Psoas muscle (tissue), 8 donors: ENCODE measurements at regions of chr2 and their contacts with region 1.

Region 1: DNA sequence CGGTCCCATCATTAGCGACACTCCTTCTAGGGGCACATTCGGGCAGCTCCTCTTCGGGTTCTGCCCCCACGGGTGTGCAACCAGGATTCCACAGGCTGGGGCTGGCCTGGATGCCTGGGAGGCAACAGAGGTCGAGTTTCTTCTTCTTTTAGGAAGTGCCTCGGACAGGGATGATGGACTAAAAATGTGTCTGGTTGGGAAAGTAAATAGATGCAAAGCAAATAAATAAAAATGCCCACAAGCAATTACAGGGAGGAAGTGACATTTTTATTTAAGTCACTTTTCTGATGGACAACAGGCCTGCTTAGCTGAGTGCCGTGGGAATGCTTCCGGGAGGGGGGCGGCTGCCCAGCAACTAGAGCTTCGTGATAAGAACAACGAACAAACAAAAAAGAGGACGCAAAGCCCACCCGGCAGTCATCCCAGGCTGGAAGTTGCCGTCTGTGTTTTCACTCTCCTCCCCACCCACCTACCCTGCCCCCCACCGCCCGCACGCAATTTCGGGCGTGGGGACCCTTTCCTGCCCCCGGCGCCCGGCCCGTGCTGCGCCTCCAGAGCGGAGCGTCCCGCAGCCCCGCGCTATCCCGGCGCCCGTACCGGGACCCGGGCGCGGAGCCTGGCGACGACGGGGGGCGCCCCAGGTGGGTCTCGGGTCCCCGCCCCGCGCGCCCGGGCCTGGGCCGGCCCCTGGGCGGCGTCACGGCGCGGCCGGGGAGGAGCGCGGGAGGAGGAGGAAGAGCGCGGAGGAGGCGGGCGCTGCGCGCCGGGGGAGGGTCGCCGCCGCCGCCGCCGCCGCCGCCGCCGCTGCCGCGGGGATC is 412 bp upstream of the NCK2 start:
- DNase-seq: peak; percentile 65 to 79
- ATAC-seq: peak; percentile 78 to 85 (median 82)
- H3K4me3 ChIP-seq: peak overlapping the region; percentile 81
- H3K27ac ChIP-seq: peak overlapping the region; percentile 86
- H3K4me1 ChIP-seq: peaks cover 36% of the 10 kb centered on the region
- H3K27me3 ChIP-seq: peaks cover 0 to 2% (median 0%) of the 10 kb centered on the region in 3 donors
- CTCF ChIP-seq: no peak

Region 2: DNA sequence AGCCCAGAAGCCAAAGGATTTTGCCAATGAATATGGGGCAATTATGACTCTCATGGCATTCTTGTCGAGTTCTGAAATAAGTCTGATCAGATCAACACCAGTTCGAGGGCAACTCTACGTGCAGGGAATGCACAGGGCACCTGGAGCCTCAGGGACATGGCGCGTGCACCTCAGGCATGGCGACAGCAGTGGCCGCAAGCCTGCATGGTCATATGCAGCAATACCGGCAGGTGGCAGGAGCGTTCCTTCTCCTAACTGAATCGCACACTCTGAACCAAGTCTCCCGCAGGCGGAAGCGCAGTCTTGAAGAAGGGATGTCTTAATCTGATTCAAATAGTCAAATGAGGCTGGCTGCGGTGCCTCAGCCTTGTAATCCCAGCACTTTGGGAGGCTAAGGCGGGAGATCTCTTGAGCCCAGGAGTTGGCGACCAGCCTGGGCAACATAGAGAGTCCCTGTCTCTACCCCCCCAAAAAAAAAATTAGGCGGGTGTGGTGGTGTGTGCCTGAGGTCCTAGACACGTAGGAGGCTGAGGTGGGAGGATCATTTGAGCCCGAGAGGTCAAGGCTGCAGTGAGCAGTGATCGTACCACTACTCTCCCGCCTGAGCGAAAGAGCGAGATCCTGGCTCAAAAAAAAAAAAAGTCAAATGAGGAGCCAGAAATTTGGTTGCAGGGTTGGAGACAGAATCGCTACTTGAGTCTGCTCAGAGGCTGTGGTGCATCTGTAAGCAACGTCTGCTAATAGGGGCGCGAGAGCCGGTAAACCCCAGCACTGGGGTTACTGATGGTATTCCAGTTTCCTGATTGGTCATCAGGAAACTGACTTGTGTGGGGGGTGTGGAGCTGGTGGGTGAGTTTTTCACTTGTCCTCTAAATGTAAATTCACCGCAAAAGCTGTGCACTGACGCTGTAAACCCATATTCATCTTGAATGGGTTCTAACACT is 374.3 kb before region 1 on chr2:
- intact Hi-C with region 1: loop called in 1 of 2 experiments (anchors 10 kb)
- DNase-seq: peak; percentile 85 to 93
- ATAC-seq: peak; percentile 76 to 79 (median 78)
- H3K4me3 ChIP-seq: no peak overlapping the region
- H3K27ac ChIP-seq: no peak overlapping the region
- H3K4me1 ChIP-seq: peaks cover 22% of the 10 kb centered on the region
- H3K27me3 ChIP-seq: no peaks in the 10 kb centered on the region
- CTCF ChIP-seq: peak; percentile 92

Region 3: GRCh38 chr2:105761931-105762515 is 17.7 kb after region 1 on chr2:
- intact Hi-C with region 1: no loop called
- DNase-seq: no peak
- ATAC-seq: no peak
- H3K4me3 ChIP-seq: no peak overlapping the region
- H3K27ac ChIP-seq: no peak overlapping the region
- H3K4me1 ChIP-seq: peaks cover 31% of the 10 kb centered on the region
- H3K27me3 ChIP-seq: no peaks in the 10 kb centered on the region
- CTCF ChIP-seq: no peak

Region 4: DNA sequence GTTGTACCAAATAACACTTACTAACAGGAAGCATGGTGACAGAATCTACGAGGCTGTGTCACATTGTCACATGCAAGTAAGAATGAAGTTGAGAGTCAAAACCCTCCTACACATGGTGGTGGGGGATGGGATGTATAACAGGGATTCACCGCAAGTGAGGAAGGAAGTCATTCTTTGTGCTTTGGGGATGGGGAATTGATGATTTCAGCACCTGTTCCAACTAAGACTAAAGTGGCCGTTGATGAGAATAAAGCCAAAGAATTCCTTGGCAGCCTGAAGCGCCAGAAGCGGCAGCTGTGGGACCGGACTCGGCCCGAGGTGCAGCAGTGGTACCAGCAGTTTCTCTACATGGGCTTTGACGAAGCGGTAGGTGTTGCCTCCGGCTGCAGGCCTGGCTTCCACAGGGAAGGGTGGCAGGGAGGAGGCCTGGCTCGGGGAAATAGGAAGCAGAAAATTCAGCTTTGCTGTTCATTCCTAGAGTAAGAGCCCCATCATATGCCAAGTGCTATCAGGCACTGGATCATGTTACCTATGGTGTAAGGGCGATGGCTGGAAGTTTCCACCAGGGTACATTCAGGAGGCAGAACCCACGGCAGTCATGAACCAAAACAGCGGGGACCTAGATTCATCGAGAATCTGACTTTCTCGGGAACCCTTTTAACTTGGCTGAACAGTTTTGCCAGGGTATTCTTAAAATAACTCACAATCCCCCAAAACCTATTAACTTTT is 329.5 kb after region 1 on chr2:
- intact Hi-C with region 1: loop called in 1 of 2 experiments (anchors 10 kb)
- DNase-seq: no peak
- ATAC-seq: peak; percentile 57 to 84 (median 76)
- H3K4me3 ChIP-seq: peak overlapping the region; percentile 20
- H3K27ac ChIP-seq: no peak overlapping the region
- H3K4me1 ChIP-seq: peaks cover 22% of the 10 kb centered on the region
- H3K27me3 ChIP-seq: no peaks in the 10 kb centered on the region
- CTCF ChIP-seq: no peak